ENCODE measurements at regions of chr6 and their contacts with region 1.

Region 1: GRCh38 chr6:151330134-151330696 is 61.1 kb downstream of the ZBTB2 start:
- DNase-seq: no peak
- CTCF ChIP-seq: no peak

Region 2: GRCh38 chr6:150905769-150906506 is 424.3 kb before region 1 on chr6:
- in situ Hi-C with region 1: loop called (anchors 10 kb)
- DNase-seq: no peak
- CTCF ChIP-seq: peak; percentile 29

Region 3: DNA sequence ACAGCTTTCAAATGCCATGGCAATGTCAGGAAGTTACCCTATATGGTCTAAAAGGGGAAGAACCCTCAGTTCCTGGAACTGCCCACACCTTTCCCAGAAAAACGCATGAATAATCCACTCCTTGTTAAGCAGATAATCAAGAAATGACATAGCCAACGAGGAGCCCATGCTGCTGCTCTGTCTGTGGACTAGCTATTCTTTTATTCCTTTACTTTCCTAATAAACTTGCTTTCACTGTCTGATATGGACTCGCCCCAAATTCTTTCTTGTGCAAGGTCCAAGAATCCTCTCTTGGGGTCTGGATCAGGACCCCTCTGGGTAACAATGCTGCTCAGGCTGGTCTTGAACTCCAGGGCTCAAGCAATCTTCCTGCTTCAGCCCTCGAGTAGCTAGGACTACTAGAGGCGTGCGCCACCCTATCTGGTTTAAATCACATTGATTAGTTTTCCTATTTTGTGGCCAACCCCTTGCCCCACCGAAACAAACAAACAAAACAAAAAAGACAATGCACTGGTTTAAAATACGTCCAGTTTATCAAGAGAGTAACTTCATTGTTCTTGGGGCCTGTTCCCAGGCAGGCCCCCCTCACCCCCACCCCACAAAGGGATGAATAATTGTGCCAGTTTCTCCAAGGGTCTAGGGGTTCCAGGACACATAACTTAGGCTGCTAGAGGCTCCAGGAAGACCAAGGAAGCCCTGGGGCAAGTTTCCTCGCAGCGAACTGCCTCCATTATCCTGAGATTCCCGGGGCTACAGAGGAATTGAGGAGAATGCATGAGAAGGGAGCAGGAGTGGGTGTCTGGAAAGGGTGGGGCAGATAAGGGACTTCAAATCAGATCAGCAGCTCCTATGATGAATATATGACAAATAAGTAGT is 100.6 kb before region 1 on chr6:
- in situ Hi-C with region 1: no loop called
- DNase-seq: no peak
- CTCF ChIP-seq: no peak

Measured in GM13977 (cell line).